ENCODE measurements at regions of chr12 and their contacts with region 1.

Region 1: GRCh38 chr12:68223083-68223747 is 2.4 kb downstream of the IL26 start:
- DNase-seq: peak; percentile 85
- ATAC-seq: peak; percentile 97
- H3K4me3 ChIP-seq: no peak overlapping the region
- H3K4me3 Mint-ChIP-seq: peak overlapping the region; percentile 66
- H3K27ac ChIP-seq: no peak overlapping the region
- H3K27ac Mint-ChIP-seq: no peak overlapping the region
- H3K4me1 ChIP-seq: peaks cover 6 to 7% of the 10 kb centered on the region in 2 donors
- H3K4me1 Mint-ChIP-seq: peaks cover 6% of the 10 kb centered on the region
- H3K27me3 ChIP-seq: no peaks in the 10 kb centered on the region
- H3K27me3 Mint-ChIP-seq: peaks cover 9% of the 10 kb centered on the region
- CTCF ChIP-seq: peak; percentile 87

Region 2: DNA sequence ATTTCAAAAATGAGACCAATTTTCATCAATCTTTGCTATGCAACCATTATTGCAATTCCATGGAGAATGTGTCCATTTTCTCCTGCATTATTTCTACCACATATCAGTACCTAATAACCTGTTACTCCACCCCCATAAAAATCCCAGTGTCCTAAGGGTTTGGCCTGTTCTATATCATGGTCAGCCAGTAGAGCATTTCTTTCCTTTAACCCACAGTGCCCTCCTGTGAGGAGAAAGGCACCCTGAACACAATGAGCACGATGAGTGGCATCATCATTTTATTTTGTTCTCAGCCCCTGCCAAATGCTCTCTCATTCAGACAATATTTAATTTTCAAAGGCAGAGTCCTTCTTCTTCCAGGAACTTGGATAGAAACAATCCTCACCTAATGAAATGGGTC is 245.5 kb before region 1 on chr12:
- CTCF ChIA-PET with region 1: no interaction called
- POLR2A ChIA-PET with region 1: no interaction called
- intact Hi-C with region 1: no loop called
- DNase-seq: no peak
- ATAC-seq: no peak
- H3K4me3 ChIP-seq: no peak overlapping the region
- H3K4me3 Mint-ChIP-seq: no peak overlapping the region
- H3K27ac ChIP-seq: no peak overlapping the region
- H3K27ac Mint-ChIP-seq: no peak overlapping the region
- H3K4me1 ChIP-seq: peaks cover 0 to 3% of the 10 kb centered on the region in 2 donors
- H3K4me1 Mint-ChIP-seq: no peaks in the 10 kb centered on the region
- H3K27me3 ChIP-seq: no peaks in the 10 kb centered on the region
- H3K27me3 Mint-ChIP-seq: no peaks in the 10 kb centered on the region
- CTCF ChIP-seq: no peak

Region 3: DNA sequence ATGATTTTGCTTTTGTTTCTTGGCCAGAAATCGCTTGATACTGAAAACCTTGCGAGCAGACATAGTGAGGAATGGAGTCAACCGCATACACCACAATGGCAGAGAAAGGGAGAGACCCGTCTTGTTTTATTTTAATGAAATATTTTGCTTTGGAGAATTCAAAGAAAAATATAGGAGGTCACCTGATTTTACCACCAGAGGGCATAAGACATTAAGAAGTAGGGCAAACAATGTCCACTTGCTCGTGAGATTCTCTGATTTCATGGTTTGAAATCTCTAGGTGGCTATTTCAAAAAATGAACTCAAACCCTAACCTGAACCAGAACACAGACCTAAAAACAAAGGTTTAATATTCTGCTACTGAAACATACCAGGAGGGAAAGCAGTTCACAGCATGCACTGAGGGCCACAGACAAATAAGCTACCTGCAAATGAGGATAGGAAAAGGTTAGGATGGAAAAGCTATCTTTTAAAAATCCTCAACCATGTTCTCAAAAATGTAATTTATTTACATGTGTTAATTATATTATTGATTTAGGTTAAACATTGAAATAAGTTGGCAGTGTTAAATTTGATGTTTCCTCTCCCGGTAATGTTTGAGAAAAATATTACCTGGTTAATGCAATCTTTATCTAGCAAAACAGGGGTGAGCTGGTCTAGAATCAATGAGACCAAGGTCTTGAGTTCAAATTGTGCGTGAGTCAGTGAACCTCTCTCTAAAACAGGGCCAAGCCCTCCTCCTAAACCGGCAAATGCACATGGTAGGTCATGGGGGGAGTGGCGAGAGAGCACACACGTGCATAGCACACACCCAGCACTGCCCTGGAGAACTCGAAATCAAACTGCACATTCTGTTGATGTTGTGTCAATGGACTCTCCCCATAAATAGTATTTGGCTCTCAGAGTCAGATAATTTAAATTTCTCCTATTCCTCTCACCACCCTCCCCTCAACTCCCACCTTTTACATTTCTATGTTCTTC is 221.4 kb before region 1 on chr12:
- CTCF ChIA-PET with region 1: no interaction called
- POLR2A ChIA-PET with region 1: no interaction called
- intact Hi-C with region 1: loop called (anchors 2 kb)
- DNase-seq: peak; percentile 33
- ATAC-seq: no peak
- H3K4me3 ChIP-seq: no peak overlapping the region
- H3K4me3 Mint-ChIP-seq: no peak overlapping the region
- H3K27ac ChIP-seq: peak overlapping the region in 1 of 2 donors; percentile 23
- H3K27ac Mint-ChIP-seq: no peak overlapping the region
- H3K4me1 ChIP-seq: peaks cover 6% of the 10 kb centered on the region in 2 donors
- H3K4me1 Mint-ChIP-seq: peaks cover 7% of the 10 kb centered on the region
- H3K27me3 ChIP-seq: no peaks in the 10 kb centered on the region
- H3K27me3 Mint-ChIP-seq: no peaks in the 10 kb centered on the region
- CTCF ChIP-seq: peak; percentile 63

Region 4: GRCh38 chr12:68210875-68211274 is 12.3 kb before region 1 on chr12:
- CTCF ChIA-PET with region 1: interaction called, 12 read pairs
- POLR2A ChIA-PET with region 1: no interaction called
- intact Hi-C with region 1: no loop called
- DNase-seq: no peak
- ATAC-seq: no peak
- H3K4me3 ChIP-seq: no peak overlapping the region
- H3K4me3 Mint-ChIP-seq: no peak overlapping the region
- H3K27ac ChIP-seq: no peak overlapping the region
- H3K27ac Mint-ChIP-seq: no peak overlapping the region
- H3K4me1 ChIP-seq: no peaks in the 10 kb centered on the region
- H3K4me1 Mint-ChIP-seq: no peaks in the 10 kb centered on the region
- H3K27me3 ChIP-seq: no peaks in the 10 kb centered on the region
- H3K27me3 Mint-ChIP-seq: peaks cover 20% of the 10 kb centered on the region
- CTCF ChIP-seq: no peak

Region 5: DNA sequence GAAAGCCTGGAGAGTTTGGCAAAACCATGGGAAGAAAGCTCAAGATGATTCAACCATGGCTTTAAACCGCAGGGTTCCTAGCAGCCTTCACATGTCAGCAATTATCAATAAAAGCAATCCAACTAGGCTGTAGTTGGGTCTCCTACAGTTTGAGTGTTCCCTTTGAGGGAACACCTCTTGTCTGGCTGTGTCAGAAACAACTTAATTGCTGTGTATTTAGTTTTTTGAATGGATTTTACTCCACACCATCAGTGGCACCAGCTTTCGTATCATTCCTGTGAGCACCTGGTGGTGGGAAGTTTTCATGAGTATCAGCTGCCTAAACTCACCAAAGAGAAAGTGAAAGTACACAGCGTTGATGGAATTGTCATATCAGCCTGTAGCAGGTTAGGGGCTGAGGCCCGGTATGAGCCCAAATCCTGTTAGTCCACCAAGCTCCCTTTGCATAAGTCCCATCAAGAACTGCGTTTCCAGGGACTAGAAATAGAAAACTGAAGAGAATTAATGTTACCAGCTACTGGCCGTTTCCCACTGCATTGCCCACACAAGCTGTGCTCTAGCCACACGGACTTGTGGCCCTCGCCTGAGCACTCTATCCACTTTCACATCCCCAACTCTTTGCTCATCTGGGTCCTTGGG is 13.3 kb after region 1 on chr12:
- CTCF ChIA-PET with region 1: interaction called, 35 read pairs
- POLR2A ChIA-PET with region 1: no interaction called
- intact Hi-C with region 1: loop called (anchors 2 kb)
- DNase-seq: peak; percentile 74
- ATAC-seq: peak; percentile 71
- H3K4me3 ChIP-seq: peak overlapping the region; percentile 6 to 62 (median 55)
- H3K4me3 Mint-ChIP-seq: peak overlapping the region; percentile 91
- H3K27ac ChIP-seq: peak overlapping the region; percentile 78 to 81
- H3K27ac Mint-ChIP-seq: peak overlapping the region; percentile 91
- H3K4me1 ChIP-seq: peaks cover 28 to 32% of the 10 kb centered on the region in 2 donors
- H3K4me1 Mint-ChIP-seq: peaks cover 33% of the 10 kb centered on the region
- H3K27me3 ChIP-seq: no peaks in the 10 kb centered on the region
- H3K27me3 Mint-ChIP-seq: no peaks in the 10 kb centered on the region
- CTCF ChIP-seq: no peak

Region 6: GRCh38 chr12:68261896-68262295 is 38.7 kb after region 1 on chr12:
- CTCF ChIA-PET with region 1: interaction called, 10 read pairs
- POLR2A ChIA-PET with region 1: no interaction called
- intact Hi-C with region 1: no loop called
- DNase-seq: no peak
- ATAC-seq: no peak
- H3K4me3 ChIP-seq: no peak overlapping the region
- H3K4me3 Mint-ChIP-seq: no peak overlapping the region
- H3K27ac ChIP-seq: no peak overlapping the region
- H3K27ac Mint-ChIP-seq: no peak overlapping the region
- H3K4me1 ChIP-seq: no peaks in the 10 kb centered on the region
- H3K4me1 Mint-ChIP-seq: no peaks in the 10 kb centered on the region
- H3K27me3 ChIP-seq: peaks cover 0 to 4% (median 0%) of the 10 kb centered on the region in 4 experiments
- H3K27me3 Mint-ChIP-seq: peaks cover 16% of the 10 kb centered on the region
- CTCF ChIP-seq: no peak

Region 7: GRCh38 chr12:68317047-68317667 is 93.9 kb after region 1 on chr12:
- CTCF ChIA-PET with region 1: interaction called, 116 read pairs
- POLR2A ChIA-PET with region 1: no interaction called
- intact Hi-C with region 1: loop called (anchors 1 kb)
- DNase-seq: peak; percentile 65
- ATAC-seq: no peak
- H3K4me3 ChIP-seq: no peak overlapping the region
- H3K4me3 Mint-ChIP-seq: no peak overlapping the region
- H3K27ac ChIP-seq: no peak overlapping the region
- H3K27ac Mint-ChIP-seq: no peak overlapping the region
- H3K4me1 ChIP-seq: no peaks in the 10 kb centered on the region
- H3K4me1 Mint-ChIP-seq: no peaks in the 10 kb centered on the region
- H3K27me3 ChIP-seq: no peaks in the 10 kb centered on the region
- H3K27me3 Mint-ChIP-seq: no peaks in the 10 kb centered on the region
- CTCF ChIP-seq: peak; percentile 89